Right cardiac atrium (tissue), 5 donors: ENCODE measurements at regions of chr4 and their contacts with region 1.

Region 1: DNA sequence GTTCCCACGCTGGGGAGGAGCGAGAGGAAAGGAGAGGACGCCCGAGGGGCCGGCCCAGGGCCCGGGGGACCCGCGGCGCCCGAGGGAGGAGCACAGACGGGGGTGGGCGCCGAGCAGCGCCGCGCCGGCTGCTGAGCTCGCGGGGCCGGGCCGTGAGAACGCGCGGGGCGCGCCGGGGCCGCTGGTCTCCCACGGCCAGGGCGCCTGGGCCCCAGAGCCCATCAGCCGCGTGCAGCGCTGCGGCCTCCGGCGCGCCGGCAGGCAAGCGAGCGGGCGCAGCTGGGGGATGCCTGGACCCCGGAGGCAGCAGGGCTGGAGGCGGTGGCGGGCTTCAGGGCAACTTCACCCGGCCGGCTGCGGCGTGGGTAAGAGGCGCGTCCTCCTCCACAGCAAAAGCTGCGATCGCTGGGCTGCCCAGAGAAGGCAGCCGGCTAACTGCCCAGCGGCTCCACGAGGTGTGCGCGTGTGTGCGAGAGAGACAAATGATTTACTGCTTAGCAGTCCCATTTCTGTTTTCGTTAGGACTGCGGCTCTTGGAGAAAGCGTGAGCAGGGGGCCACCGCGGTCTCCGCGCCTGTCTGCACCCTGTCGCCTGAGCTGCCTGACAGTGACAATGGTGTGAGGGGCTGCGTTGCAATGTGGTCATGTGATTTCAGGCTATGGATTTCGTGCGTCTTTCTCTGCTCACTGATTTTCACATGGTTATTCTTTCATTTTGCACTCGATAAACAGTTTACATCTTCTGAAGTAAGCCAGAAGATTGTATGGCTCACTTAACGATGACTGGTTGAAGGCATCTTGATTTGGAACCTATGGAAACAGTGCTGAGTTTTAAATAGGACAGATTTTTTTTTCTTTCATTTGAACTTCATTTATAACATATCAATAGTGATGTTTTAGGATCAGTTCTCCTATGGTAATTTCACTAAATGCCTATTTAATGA is 1.2 kb downstream of the GUCY1A1 start:
- DNase-seq: peak in 2 of 3 donors; percentile 77 to 87
- ATAC-seq: peak; percentile 86 to 94
- H3K4me3 ChIP-seq: peak overlapping the region; percentile 64
- H3K27ac ChIP-seq: peak overlapping the region; percentile 50
- H3K4me1 ChIP-seq: no peaks in the 10 kb centered on the region
- H3K27me3 ChIP-seq: no peaks in the 10 kb centered on the region

Region 2: GRCh38 chr4:155342142-155342541 is 325.7 kb before region 1 on chr4:
- intact Hi-C with region 1: no loop called
- DNase-seq: no peak
- ATAC-seq: no peak
- H3K4me3 ChIP-seq: no peak overlapping the region
- H3K27ac ChIP-seq: no peak overlapping the region
- H3K4me1 ChIP-seq: no peaks in the 10 kb centered on the region
- H3K27me3 ChIP-seq: no peaks in the 10 kb centered on the region

Region 3: GRCh38 chr4:155442267-155443105 is 225.4 kb before region 1 on chr4:
- intact Hi-C with region 1: loop called in 1 of 4 experiments (anchors 10 kb)
- DNase-seq: peak; percentile 81 to 93 (median 92)
- ATAC-seq: peak; percentile 91 to 94
- H3K4me3 ChIP-seq: peak overlapping the region; percentile 21
- H3K27ac ChIP-seq: no peak overlapping the region
- H3K4me1 ChIP-seq: no peaks in the 10 kb centered on the region
- H3K27me3 ChIP-seq: no peaks in the 10 kb centered on the region

Region 4: GRCh38 chr4:155491336-155492120 is 176.3 kb before region 1 on chr4:
- intact Hi-C with region 1: loop called in 1 of 4 experiments (anchors 10 kb)
- DNase-seq: no peak
- ATAC-seq: no peak
- H3K4me3 ChIP-seq: no peak overlapping the region
- H3K27ac ChIP-seq: no peak overlapping the region
- H3K4me1 ChIP-seq: no peaks in the 10 kb centered on the region
- H3K27me3 ChIP-seq: no peaks in the 10 kb centered on the region

Region 5: GRCh38 chr4:155742310-155743015 is 74.6 kb after region 1 on chr4:
- intact Hi-C with region 1: no loop called
- DNase-seq: no peak
- ATAC-seq: no peak
- H3K4me3 ChIP-seq: no peak overlapping the region
- H3K27ac ChIP-seq: no peak overlapping the region
- H3K4me1 ChIP-seq: no peaks in the 10 kb centered on the region
- H3K27me3 ChIP-seq: no peaks in the 10 kb centered on the region

Region 6: DNA sequence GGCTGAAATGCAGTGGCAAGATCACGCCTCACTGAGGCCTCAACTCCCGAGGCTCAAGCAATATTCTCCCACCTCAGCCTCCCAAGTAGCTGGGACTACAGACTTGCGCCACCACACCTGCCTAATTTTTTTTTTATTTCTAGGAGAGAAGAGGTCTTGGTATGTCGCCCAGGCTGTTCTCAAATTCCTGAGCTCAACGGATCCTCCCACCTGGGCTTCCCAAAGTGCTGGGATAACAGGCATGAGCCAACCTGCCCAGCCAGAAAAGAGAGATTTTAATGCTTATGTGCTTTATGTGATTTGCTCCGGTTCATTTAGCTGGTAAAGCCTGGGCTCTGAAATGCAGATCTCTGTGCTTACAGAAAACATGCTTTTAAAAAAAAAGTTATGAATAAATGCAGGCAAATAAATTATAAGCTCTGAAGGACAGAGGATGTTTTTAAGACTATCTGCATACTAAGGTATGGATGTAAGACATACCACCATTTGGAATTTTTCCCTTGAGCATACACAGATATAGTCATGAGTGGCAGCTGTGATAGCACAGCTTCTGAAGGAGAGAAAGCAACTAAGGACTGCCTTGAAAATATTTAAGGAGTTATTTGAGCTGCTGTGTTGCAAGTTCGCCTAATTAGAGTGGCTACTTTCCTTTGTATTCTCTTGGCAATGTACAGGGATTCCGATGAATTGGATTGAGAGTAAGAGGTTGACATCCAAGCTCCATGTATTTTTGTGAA is 104.8 kb after region 1 on chr4:
- intact Hi-C with region 1: no loop called
- DNase-seq: no peak
- ATAC-seq: no peak
- H3K4me3 ChIP-seq: no peak overlapping the region
- H3K27ac ChIP-seq: no peak overlapping the region
- H3K4me1 ChIP-seq: no peaks in the 10 kb centered on the region
- H3K27me3 ChIP-seq: no peaks in the 10 kb centered on the region

Region 7: GRCh38 chr4:155837203-155837796 is 169.5 kb after region 1 on chr4:
- intact Hi-C with region 1: no loop called
- DNase-seq: no peak
- ATAC-seq: no peak
- H3K4me3 ChIP-seq: no peak overlapping the region
- H3K27ac ChIP-seq: no peak overlapping the region
- H3K4me1 ChIP-seq: no peaks in the 10 kb centered on the region
- H3K27me3 ChIP-seq: no peaks in the 10 kb centered on the region